ENCODE measurements at regions of chr15 and their contacts with region 1.

Region 1: DNA sequence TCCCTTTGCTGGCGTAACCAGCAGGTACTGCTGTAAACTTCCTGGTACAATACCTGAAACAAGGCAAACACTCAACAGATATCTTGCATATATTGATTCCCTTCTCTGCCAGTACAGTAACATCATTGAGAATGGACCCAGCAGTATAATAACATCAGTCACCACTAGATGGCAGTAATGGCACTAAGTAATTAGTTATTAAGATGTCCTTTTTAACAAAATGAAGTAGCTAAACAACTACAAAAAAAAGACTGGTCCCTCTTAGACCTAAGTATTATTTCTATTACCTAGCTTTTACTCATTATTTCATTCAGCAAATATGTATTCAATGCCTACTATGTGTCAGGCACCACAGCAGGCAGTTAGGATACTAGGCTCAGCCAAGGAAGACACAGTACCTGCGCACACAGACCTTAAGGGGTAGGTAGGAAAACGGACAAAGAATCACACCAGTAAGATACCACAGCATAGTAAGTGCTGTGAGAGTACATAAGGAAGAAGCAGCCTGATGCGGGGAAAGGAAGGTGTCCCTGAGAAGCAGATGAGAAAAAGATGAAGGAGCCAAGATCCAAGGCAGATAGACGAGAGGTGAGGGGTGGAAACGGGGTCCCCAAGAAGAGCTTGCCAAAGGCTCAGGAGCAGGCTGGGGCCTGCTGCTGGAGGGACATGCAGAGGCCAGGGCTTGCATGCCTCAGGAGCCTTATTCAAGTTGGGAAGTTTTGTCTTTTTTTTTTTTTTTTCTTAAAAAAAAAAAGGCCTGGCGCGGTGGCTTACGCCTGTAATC is 102.8 kb upstream of the CHD2 start:
- DNase-seq: peak; percentile 48
- H3K4me3 ChIP-seq: no peak overlapping the region
- H3K27ac ChIP-seq: peak overlapping the region; percentile 57
- H3K27me3 ChIP-seq: no peaks in the 10 kb centered on the region
- CTCF ChIP-seq: peak; percentile 66

Region 2: GRCh38 chr15:92763459-92763858 is 33.9 kb before region 1 on chr15:
- CTCF ChIA-PET with region 1: no interaction called
- POLR2A ChIA-PET with region 1: no interaction called
- DNase-seq: no peak
- H3K4me3 ChIP-seq: no peak overlapping the region
- H3K27ac ChIP-seq: no peak overlapping the region
- H3K27me3 ChIP-seq: no peaks in the 10 kb centered on the region
- CTCF ChIP-seq: no peak

Region 3: GRCh38 chr15:92881802-92882696 is 84.7 kb after region 1 on chr15:
- CTCF ChIA-PET with region 1: interaction called, 10 read pairs
- POLR2A ChIA-PET with region 1: interaction called, 35 read pairs
- DNase-seq: peak; percentile 100
- H3K4me3 ChIP-seq: peak overlapping the region; percentile 55
- H3K27ac ChIP-seq: peak overlapping the region; percentile 71
- H3K27me3 ChIP-seq: no peaks in the 10 kb centered on the region
- CTCF ChIP-seq: no peak

Region 4: GRCh38 chr15:92917606-92918407 is 120.4 kb after region 1 on chr15:
- CTCF ChIA-PET with region 1: interaction called, 92 read pairs
- POLR2A ChIA-PET with region 1: interaction called, 7 read pairs
- DNase-seq: peak; percentile 83
- H3K4me3 ChIP-seq: no peak overlapping the region
- H3K27ac ChIP-seq: peak overlapping the region; percentile 68
- H3K27me3 ChIP-seq: no peaks in the 10 kb centered on the region
- CTCF ChIP-seq: peak; percentile 83

Region 5: DNA sequence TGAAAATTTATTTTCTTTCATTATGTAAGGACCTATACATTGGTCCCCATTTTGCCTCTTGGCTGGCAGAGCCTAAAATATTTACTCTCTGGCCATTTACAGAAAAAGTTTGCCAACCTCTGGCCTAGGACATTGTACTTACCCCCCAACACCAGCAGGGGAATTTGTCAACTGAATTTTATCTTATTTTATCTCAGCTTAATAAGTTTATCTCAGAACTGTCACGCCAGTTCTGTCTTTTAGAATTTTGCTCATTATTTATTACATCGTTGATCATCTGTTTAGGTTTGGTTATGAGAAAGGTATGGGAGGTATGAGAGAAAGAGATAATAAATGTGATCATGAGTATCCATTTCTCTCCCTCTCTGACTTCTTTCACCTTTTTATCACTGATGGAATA is 141.0 kb after region 1 on chr15:
- CTCF ChIA-PET with region 1: interaction called, 17 read pairs
- POLR2A ChIA-PET with region 1: interaction called, 5 read pairs
- DNase-seq: no peak
- H3K4me3 ChIP-seq: no peak overlapping the region
- H3K27ac ChIP-seq: no peak overlapping the region
- H3K27me3 ChIP-seq: no peaks in the 10 kb centered on the region
- CTCF ChIP-seq: peak; percentile 36

Region 6: GRCh38 chr15:92979011-92979701 is 181.8 kb after region 1 on chr15:
- CTCF ChIA-PET with region 1: interaction called, 10 read pairs
- POLR2A ChIA-PET with region 1: no interaction called
- DNase-seq: no peak
- H3K4me3 ChIP-seq: no peak overlapping the region
- H3K27ac ChIP-seq: no peak overlapping the region
- H3K27me3 ChIP-seq: no peaks in the 10 kb centered on the region
- CTCF ChIP-seq: no peak

Region 7: GRCh38 chr15:93030430-93031105 is 233.2 kb after region 1 on chr15:
- CTCF ChIA-PET with region 1: interaction called, 52 read pairs
- POLR2A ChIA-PET with region 1: no interaction called
- DNase-seq: peak; percentile 26
- H3K4me3 ChIP-seq: no peak overlapping the region
- H3K27ac ChIP-seq: peak overlapping the region; percentile 11
- H3K27me3 ChIP-seq: no peaks in the 10 kb centered on the region
- CTCF ChIP-seq: peak; percentile 84

Region 8: DNA sequence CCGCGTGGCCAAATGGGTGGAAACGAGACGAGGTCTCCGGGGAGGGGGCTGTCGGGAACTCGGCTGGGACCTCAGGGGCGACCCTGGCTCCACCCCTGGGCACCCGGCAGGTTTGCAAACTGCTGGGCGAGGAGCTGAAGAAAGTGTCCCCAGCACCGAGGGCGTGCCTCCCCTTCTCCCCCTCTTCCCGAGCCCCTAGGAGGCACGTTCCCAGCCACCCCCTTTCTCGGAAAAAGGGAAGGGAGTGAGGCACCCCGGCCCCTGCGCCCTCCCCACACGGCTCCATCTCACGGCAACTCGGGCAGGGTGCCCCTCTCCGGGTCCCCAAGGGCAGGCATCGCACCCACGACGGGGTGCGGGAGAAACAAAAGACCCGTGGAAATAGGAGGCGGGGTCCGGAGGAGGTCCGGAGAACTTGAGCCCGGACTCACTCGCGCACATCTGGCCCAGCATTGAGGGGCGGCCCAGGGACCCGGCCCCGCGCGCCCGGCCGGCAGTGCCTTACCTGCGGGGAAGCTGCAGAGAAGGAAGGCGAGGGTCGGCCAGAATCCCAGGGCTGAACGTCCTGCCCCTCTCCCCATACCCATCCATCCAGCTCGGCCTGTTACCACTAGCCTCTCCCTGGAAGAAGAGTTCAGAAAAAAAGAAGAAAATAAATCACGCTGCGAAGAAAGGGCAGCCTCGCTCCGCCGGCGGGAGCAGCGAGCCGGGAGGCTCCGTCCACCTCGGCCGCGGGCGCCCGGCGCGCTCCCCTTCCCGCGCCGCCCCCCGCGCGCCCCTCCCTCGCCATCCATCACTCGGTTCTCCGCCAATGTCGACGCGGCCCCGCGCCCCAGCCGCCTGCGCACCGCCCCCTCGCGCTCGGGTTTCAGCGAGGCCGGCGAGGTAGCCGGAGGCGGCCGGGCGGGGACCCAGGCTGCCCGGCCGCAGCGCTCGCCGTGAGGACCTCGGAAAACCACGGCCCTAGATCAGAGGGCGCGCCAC is 275.3 kb after region 1 on chr15:
- CTCF ChIA-PET with region 1: no interaction called
- POLR2A ChIA-PET with region 1: no interaction called
- DNase-seq: no peak
- H3K4me3 ChIP-seq: peak overlapping the region; percentile 66
- H3K27ac ChIP-seq: no peak overlapping the region
- H3K27me3 ChIP-seq: peaks cover 42% of the 10 kb centered on the region
- CTCF ChIP-seq: no peak